ENCODE measurements at regions of chr1 and their contacts with region 1.

Region 1: DNA sequence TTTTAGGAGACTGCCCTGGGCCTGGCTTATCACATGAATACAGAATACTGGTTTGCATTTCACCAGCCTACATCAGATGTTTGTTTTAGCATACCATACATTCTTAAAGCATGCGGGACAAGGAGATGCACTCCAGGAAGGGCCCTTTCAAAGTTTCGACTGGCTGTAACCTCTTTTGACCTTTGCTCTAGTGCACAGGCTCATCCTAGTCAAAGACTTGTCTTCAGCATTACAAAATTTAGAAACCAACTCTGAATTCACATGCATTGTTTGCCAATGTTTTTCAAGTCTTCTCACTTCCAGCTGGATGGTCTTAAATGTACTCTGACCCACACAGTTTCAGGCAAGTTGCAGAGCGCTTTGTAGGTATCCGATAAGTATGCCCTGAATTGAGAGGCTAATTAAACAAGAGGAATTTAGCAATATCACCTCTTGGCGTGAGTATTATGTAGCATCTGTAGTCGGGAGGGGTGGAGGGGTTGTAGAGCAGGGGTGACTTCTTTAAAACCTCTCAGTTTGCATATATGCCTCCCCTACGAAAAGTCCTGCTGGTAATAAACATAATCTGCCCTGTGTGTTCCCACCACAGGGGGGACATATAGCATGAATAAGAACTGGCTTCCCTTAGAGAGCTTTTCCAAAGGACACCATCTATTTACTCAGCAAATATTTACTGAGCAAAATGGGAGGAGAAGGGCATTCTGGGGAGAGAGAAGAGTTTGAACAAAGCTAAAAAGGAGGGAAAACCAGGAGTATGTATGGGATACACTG is 24.4 kb upstream of the AHCYL1 start:
- DNase-seq: peak; percentile 84 to 89
- H3K4me3 ChIP-seq: no peak overlapping the region
- H3K4me3 Mint-ChIP-seq: peak overlapping the region; percentile 62
- H3K27ac Mint-ChIP-seq: peak overlapping the region; percentile 80
- H3K4me1 ChIP-seq: peaks cover 59% of the 10 kb centered on the region
- H3K4me1 Mint-ChIP-seq: peaks cover 44% of the 10 kb centered on the region
- H3K27me3 ChIP-seq: no peaks in the 10 kb centered on the region
- H3K27me3 Mint-ChIP-seq: no peaks in the 10 kb centered on the region
- CTCF ChIP-seq: peak; percentile 11 to 26

Region 2: GRCh38 chr1:109931189-109931731 is 28.9 kb before region 1 on chr1:
- CTCF ChIA-PET with region 1: interaction called, 3 read pairs
- POLR2A ChIA-PET with region 1: interaction called, 6 read pairs
- intact Hi-C with region 1: loop called (anchors 1 kb)
- DNase-seq: peak; percentile 83 to 90
- H3K4me3 ChIP-seq: no peak overlapping the region
- H3K4me3 Mint-ChIP-seq: peak overlapping the region; percentile 14
- H3K27ac Mint-ChIP-seq: peak overlapping the region; percentile 83
- H3K4me1 ChIP-seq: peaks cover 57% of the 10 kb centered on the region
- H3K4me1 Mint-ChIP-seq: peaks cover 23% of the 10 kb centered on the region
- H3K27me3 ChIP-seq: no peaks in the 10 kb centered on the region
- H3K27me3 Mint-ChIP-seq: no peaks in the 10 kb centered on the region
- CTCF ChIP-seq: no peak

Region 3: DNA sequence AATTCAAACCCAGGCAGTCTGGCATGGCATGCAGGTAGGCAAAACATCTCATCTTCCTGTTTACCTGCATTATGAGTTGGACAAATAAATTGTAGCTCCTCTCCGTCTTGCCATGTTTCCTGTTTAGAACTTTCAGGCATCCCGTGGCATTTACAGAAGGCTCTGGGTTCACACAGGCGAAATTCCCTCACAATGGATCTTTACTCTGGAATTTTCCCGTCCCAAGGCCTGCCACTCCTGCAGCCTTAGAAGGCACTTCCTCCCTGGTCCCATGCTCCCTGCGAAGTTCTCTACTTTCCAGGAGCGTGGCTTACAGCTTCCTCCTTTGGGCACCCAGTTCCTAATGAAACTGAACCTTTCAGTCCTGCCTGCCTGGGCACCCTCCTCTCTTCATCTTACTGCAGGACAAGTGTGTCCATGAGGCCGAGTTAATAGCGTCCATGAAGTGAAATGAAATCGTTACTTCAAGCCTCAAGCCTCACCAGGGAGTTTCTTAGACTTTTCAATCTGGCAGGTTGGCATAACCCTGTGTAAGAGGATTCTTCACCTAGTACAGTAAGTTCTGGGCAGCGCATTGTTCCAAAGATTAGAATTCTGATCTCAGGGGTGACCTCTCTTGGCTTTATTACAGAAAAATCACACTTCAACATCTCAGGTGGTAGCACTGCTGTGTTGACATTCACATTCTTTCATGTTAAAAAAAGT is 12.4 kb before region 1 on chr1:
- CTCF ChIA-PET with region 1: interaction called, 10 read pairs
- POLR2A ChIA-PET with region 1: interaction called, 8 read pairs
- intact Hi-C with region 1: loop called (anchors 1 kb)
- DNase-seq: no peak
- H3K4me3 ChIP-seq: no peak overlapping the region
- H3K4me3 Mint-ChIP-seq: peak overlapping the region; percentile 33
- H3K27ac Mint-ChIP-seq: peak overlapping the region; percentile 84
- H3K4me1 ChIP-seq: peaks cover 37% of the 10 kb centered on the region
- H3K4me1 Mint-ChIP-seq: peaks cover 22% of the 10 kb centered on the region
- H3K27me3 ChIP-seq: no peaks in the 10 kb centered on the region
- H3K27me3 Mint-ChIP-seq: no peaks in the 10 kb centered on the region
- CTCF ChIP-seq: no peak

Measured in Caco-2 (cell line).